Dorsolateral prefrontal cortex (tissue), 120 donors: ENCODE measurements at regions of chr18 and their contacts with region 1.

Region 1: DNA sequence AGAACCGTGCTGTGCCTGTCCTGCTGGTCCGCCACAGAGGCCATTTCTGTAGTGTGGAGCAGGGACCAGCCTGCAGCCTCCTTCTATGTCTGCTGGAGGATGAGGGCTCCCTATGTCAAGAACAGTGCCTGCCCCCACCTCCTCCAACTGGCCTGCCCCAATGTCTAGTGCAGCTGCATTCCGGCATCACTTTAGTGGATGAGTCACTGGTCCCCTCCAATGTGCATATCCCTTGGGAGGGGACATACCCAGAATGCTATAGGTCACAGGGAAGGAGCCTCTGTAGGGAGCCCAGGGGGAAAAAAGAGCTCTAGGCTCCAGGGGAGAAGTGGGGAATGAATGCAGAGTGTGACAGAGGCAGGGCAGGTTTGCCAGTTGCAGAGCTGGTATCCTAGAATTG is 219.6 kb downstream of the CELF4 start:
- DNase-seq: no peak
- H3K4me3 ChIP-seq: no peak overlapping the region
- H3K27ac ChIP-seq: no peak overlapping the region
- H3K27me3 ChIP-seq: peaks cover 0 to 5% (median 0%) of the 10 kb centered on the region in 45 donors
- CTCF ChIP-seq: no peak

Region 2: DNA sequence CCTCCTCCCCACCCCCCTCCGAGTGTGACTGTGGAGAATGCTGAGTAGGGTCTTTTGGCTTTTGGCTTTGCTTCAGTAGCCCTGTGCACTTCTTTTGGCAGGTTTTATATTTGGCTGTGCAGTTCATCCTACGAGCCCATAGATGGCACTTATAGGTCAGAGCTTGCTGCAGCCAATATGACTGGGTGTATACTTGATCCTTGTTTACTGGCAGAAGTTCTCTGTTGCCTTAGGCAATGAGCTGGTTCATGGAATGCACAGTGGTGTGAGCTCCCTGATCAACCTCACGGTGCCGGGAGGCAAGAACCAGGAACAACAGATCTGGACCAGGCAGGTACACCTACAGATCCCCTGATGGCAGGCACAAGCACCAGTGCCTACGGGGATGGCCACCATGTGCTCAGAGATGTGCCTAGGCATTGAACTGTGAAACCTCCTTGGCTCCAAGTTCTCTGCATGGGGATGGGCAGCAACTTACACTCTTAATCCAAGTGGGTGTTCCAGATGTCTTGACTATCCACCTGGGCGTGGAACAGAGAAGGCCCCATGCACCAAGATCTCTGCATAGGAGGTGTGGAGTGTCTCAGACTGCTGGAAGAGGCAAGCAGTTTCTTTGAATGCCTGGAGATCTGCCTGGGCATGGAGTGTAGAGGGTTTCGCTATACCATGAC is 326.8 kb before region 1 on chr18:
- intact Hi-C with region 1: no loop called
- DNase-seq: no peak
- H3K4me3 ChIP-seq: no peak overlapping the region
- H3K27ac ChIP-seq: no peak overlapping the region
- H3K27me3 ChIP-seq: no peaks in the 10 kb centered on the region
- CTCF ChIP-seq: no peak

Region 3: DNA sequence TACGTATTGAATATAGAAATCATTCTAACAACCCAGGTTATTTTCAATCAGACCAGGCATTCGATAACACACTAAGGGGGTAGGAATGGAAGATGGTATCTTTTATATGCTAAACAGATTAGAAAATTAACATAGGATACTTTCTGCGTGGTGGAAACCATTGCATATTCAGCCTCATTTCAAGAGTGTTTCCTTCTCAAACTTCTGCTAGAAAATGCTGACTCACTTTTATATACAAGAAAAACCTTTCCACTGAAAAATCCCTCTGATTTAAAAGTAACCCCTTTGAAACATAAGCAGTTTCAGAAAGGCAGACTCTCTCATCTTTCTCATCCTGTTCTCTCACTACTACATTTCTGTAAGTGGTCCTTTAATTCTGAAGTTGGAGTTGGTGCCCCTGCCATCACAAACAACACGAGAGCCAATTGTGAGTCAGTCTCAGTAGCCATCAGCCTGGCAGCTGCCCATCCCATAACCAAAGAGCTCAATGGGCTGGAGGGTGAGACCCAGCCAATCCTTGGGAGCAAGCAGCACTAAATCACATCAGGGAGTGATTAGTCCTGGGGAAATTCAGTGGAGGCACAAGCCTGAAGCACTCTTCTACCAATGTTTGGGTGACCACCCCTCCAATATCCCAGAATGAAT is 123.6 kb before region 1 on chr18:
- intact Hi-C with region 1: no loop called
- DNase-seq: no peak
- H3K4me3 ChIP-seq: no peak overlapping the region
- H3K27ac ChIP-seq: no peak overlapping the region
- H3K27me3 ChIP-seq: no peaks in the 10 kb centered on the region
- CTCF ChIP-seq: no peak

Region 4: GRCh38 chr18:37476182-37476581 is 130.1 kb after region 1 on chr18:
- intact Hi-C with region 1: loop called in 1 of 2 experiments (anchors 10 kb)
- DNase-seq: peak in 5 of 10 donors; percentile 42 to 71 (median 55)
- H3K4me3 ChIP-seq: no peak overlapping the region
- H3K27ac ChIP-seq: peak overlapping the region in 16 of 59 donors; percentile 8 to 74 (median 36)
- H3K27me3 ChIP-seq: peaks cover 0 to 2% (median 0%) of the 10 kb centered on the region in 45 donors
- CTCF ChIP-seq: peak; percentile 40 to 79 (median 64)

Region 5: DNA sequence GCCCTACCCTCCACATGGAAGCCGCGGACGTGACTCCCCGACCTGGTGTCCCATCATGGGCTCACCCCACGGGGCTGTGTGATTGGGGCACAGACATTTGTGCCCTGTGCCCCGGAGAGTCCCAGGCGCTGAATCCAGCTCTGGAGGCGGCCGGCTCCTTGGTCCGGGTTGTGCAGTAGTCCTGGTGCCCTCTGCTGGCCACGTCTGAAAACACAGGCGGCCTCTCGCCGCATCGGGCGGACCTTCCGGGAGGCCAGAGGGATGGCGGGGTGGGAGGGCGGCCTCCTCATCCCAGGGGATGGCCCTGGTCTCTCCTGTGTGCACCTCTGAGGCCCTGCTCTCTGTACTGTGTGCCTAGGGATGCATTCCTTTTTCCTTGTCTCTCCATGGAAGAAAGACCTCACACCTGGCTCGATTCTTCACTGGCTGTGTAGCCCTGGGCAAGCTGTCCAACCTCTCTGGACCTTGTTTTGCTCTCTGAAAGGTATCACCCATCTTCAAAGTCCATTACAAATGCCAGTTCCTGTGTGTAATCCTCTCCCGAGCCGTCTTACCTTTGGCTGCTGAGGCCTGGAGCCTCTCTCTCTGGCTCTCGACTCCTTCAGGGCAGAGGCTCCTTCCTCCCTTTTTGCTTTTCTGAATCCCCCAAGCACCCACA is 191.9 kb after region 1 on chr18:
- intact Hi-C with region 1: loop called (anchors 2 to 10 kb)
- DNase-seq: peak; percentile 71 to 88 (median 80)
- H3K4me3 ChIP-seq: peak overlapping the region in 19 of 59 donors; percentile 5 to 48 (median 27)
- H3K27ac ChIP-seq: peak overlapping the region in 41 of 59 donors; percentile 1 to 84 (median 66)
- H3K27me3 ChIP-seq: peaks cover 0 to 10% (median 0%) of the 10 kb centered on the region in 45 donors
- CTCF ChIP-seq: peak; percentile 55 to 91 (median 83)